ENCODE measurements at regions of chr20 and their contacts with region 1.

Region 1: DNA sequence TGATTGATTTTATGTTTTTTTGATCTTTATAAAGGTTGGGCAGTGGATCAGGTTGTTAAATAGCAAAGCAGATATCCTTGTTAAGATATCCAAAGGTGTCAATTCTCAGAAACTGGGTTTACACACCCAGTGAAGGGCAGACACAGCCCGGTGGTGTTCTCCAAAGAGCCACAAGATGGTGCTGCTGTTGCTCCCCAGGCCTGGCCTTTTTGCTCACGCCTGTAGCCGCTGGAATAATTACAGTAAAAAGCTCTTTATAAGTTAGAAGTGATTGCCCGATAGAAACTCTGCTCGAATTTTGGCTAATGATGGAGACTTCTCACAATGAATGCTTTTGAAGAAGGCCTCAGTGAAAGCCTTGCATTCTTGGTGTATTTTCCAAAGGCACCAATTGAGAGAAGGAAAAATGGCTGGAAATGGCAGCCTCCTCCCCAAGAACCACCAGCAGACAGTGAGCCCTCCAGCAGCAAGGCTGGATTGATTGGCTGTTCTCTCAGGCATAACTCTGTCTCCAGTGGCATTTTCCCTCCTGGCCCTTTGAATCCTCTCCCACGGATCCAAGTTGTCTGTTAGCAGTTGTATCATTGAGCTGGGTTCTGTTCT is 120.5 kb upstream of the CHD6 start:
- DNase-seq: peak in 3 of 5 donors; percentile 42 to 53 (median 44)
- H3K4me3 ChIP-seq: no peak overlapping the region
- H3K27ac ChIP-seq: no peak overlapping the region
- H3K4me1 ChIP-seq: no peaks in the 10 kb centered on the region
- H3K27me3 ChIP-seq: no peaks in the 10 kb centered on the region
- CTCF ChIP-seq: peak in 2 of 3 donors; percentile 29 to 56
- EP300 ChIP-seq: no peak
- POLR2A ChIP-seq: no peak

Region 2: DNA sequence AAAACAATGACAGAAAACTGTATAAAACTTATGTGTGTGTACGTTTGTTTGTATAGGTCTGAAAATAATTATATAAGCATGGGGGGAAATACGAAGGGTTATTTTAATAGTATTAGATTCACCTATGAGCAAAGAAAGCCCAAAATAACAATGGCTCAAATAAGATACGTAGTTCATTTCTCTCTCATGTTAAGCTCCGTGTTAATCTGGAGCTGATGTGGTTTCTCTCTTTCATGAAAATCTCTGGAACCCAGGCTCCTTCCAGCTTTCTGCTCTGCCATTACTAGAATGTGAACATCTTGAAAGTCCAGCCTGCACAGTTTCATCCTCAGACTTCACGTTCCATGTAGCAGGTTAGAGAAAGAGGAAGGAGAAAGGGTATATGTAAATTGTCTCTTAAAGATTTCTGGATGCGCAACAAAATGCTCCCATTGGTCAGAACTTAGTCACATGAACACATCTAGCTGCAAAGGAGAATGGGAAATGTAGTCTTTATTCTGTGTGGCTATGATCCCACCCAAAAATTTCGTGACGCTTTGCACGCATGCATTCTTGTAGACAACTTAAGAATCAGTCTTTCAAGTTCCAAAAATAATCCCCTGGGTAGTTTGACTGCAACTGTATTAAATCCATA is 74.2 kb before region 1 on chr20:
- intact Hi-C with region 1: no loop called
- DNase-seq: no peak
- H3K4me3 ChIP-seq: no peak overlapping the region
- H3K27ac ChIP-seq: no peak overlapping the region
- H3K4me1 ChIP-seq: no peaks in the 10 kb centered on the region
- H3K27me3 ChIP-seq: no peaks in the 10 kb centered on the region
- CTCF ChIP-seq: no peak
- EP300 ChIP-seq: no peak
- POLR2A ChIP-seq: no peak

Region 3: GRCh38 chr20:41854765-41855164 is 116.1 kb after region 1 on chr20:
- intact Hi-C with region 1: no loop called
- DNase-seq: no peak
- H3K4me3 ChIP-seq: no peak overlapping the region
- H3K27ac ChIP-seq: no peak overlapping the region
- H3K4me1 ChIP-seq: no peaks in the 10 kb centered on the region
- H3K27me3 ChIP-seq: no peaks in the 10 kb centered on the region
- CTCF ChIP-seq: no peak
- EP300 ChIP-seq: no peak
- POLR2A ChIP-seq: no peak

Region 4: DNA sequence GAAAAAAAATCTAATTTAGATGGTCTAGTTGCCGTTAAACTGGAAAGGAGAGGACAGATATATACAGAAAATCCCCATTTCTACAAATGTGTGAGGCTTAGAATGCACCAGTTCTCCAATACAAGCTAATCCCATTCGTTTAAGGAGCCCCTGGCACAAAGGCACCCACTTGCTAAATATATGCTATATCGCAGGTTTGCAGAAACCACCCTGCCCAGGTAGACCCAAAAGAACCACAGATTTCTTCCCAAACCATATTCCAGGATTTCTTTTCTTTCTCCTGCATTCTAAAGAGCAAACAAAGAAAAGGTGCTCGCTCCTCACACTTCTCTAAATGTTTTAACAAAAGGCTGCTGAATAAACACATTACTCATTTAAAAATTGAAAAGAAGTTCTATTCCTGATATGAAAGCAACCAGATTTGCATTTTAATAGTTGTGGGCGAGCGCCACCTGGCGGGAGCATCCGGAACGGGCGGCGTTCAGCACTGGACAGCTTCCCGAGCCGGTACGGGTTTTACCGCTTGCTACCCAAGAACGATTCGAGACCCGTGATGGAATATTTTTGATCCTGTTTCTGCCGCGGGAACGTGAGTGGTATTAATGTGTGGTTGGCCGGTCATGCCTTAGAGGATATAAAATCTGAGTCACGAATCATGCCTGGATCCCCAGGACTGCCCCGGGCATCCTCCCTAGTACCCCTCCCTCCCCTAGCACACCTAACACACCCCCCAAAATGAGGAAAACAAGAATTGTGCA is 1449.0 kb after region 1 on chr20:
- intact Hi-C with region 1: loop called in 2 of 4 experiments (anchors 5 kb)
- DNase-seq: peak in 4 of 5 donors; percentile 33 to 75 (median 60)
- H3K4me3 ChIP-seq: no peak overlapping the region
- H3K27ac ChIP-seq: no peak overlapping the region
- H3K4me1 ChIP-seq: no peaks in the 10 kb centered on the region
- H3K27me3 ChIP-seq: no peaks in the 10 kb centered on the region
- CTCF ChIP-seq: peak in 1 of 3 donors; percentile 53
- EP300 ChIP-seq: no peak
- POLR2A ChIP-seq: no peak

Measured in ovary (tissue), 10 donors.